ENCODE measurements at regions of chr12 and their contacts with region 1.

Region 1: DNA sequence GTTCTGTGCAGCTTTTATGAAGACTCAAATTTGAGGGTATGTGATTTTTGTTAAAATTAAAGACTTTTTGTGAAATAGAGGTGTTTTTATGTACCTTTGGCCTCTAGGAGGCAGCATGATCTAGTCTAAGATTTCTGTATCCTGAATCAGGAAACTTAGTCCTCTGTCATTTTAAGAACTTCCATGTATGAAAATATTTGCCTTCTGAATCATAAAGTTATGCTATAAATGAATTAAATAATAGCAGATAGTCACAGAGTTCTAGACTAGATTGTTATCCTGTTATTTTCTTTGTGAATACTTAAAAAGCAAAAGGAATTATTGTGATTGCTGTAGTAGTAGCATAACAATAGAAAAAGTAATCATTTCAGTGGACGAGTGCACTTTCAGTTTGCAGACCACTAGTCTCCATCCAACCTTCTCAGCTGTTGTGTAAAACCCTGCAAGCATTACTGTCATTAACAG is 56.3 kb downstream of the FGD4 start:
- DNase-seq: peak; percentile 55
- ATAC-seq: peak; percentile 78
- H3K4me3 ChIP-seq: peak overlapping the region; percentile 9 to 19
- H3K27ac ChIP-seq: no peak overlapping the region
- H3K4me1 ChIP-seq: peaks cover 38% of the 10 kb centered on the region
- H3K27me3 ChIP-seq: no peaks in the 10 kb centered on the region; the same call in 1 of the 2 replicates
- CTCF ChIP-seq: peak; percentile 79; the same call in 1 of the 2 replicates

Region 2: GRCh38 chr12:32365473-32366064 is 90.1 kb before region 1 on chr12:
- CTCF ChIA-PET with region 1: no interaction called
- POLR2A ChIA-PET with region 1: no interaction called
- in situ Hi-C with region 1: no loop called
- intact Hi-C with region 1: loop called (anchors 10 kb)
- DNase-seq: peak; percentile 77
- ATAC-seq: peak; percentile 84
- H3K4me3 ChIP-seq: no peak overlapping the region
- H3K27ac ChIP-seq: no peak overlapping the region
- H3K4me1 ChIP-seq: no peaks in the 10 kb centered on the region
- H3K27me3 ChIP-seq: no peaks in the 10 kb centered on the region
- CTCF ChIP-seq: peak; percentile 86; the same call in 1 of the 2 replicates

Region 3: GRCh38 chr12:32419520-32419960 is 36.1 kb before region 1 on chr12:
- CTCF ChIA-PET with region 1: no interaction called
- POLR2A ChIA-PET with region 1: no interaction called
- in situ Hi-C with region 1: no loop called
- intact Hi-C with region 1: no loop called
- DNase-seq: no peak
- ATAC-seq: peak; percentile 56
- H3K4me3 ChIP-seq: no peak overlapping the region
- H3K27ac ChIP-seq: no peak overlapping the region
- H3K4me1 ChIP-seq: no peaks in the 10 kb centered on the region
- H3K27me3 ChIP-seq: no peaks in the 10 kb centered on the region
- CTCF ChIP-seq: no peak

Region 4: GRCh38 chr12:32659908-32660440 is 204.3 kb after region 1 on chr12:
- CTCF ChIA-PET with region 1: interaction called, 13 read pairs
- POLR2A ChIA-PET with region 1: no interaction called
- in situ Hi-C with region 1: no loop called
- intact Hi-C with region 1: loop called (anchors 1 kb)
- DNase-seq: no peak
- ATAC-seq: peak; percentile 44; the same call in 1 of the 2 replicates
- H3K4me3 ChIP-seq: no peak overlapping the region
- H3K27ac ChIP-seq: no peak overlapping the region
- H3K4me1 ChIP-seq: no peaks in the 10 kb centered on the region
- H3K27me3 ChIP-seq: no peaks in the 10 kb centered on the region
- CTCF ChIP-seq: no peak

Region 5: GRCh38 chr12:32671930-32672780 is 216.5 kb after region 1 on chr12:
- CTCF ChIA-PET with region 1: interaction called, 5 read pairs
- POLR2A ChIA-PET with region 1: no interaction called
- in situ Hi-C with region 1: no loop called
- intact Hi-C with region 1: loop called (anchors 1 kb)
- DNase-seq: peak; percentile 51
- ATAC-seq: peak; percentile 83
- H3K4me3 ChIP-seq: no peak overlapping the region
- H3K27ac ChIP-seq: no peak overlapping the region
- H3K4me1 ChIP-seq: 0 out of 2 replicates have a peak, but pooled peaks cover 4% of the 10 kb centered on the region
- H3K27me3 ChIP-seq: no peaks in the 10 kb centered on the region
- CTCF ChIP-seq: peak; percentile 84

Region 6: DNA sequence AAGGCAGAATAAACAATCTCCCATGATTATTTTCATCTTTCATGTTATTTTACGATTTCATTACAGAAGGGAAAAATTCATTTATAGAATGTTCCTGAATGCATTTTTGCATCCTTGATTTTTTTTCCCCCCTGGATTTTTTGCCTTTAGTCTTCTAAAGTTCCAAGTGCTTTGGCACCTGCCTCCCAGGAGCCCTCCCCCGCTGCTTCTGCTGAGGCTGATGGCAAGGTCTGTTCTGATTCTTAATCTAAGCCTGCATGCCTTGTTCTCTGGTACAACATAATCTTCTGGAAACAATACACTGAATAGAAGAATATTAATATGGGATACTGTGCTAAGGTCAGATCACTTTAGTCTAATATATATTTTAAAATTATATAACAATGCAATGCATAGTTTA is 282.1 kb after region 1 on chr12:
- CTCF ChIA-PET with region 1: no interaction called
- POLR2A ChIA-PET with region 1: no interaction called
- in situ Hi-C with region 1: no loop called
- intact Hi-C with region 1: loop called (anchors 10 kb)
- DNase-seq: no peak
- ATAC-seq: no peak
- H3K4me3 ChIP-seq: no peak overlapping the region
- H3K27ac ChIP-seq: no peak overlapping the region
- H3K4me1 ChIP-seq: no peaks in the 10 kb centered on the region
- H3K27me3 ChIP-seq: no peaks in the 10 kb centered on the region
- CTCF ChIP-seq: no peak